ENCODE measurements at regions of chr11 and their contacts with region 1.

Region 1: GRCh38 chr11:34840736-34841386 is 75.3 kb downstream of the APIP start:
- DNase-seq: no peak
- H3K4me3 Mint-ChIP-seq: no peak overlapping the region
- H3K27ac Mint-ChIP-seq: no peak overlapping the region
- H3K4me1 Mint-ChIP-seq: no peaks in the 10 kb centered on the region
- H3K27me3 Mint-ChIP-seq: peaks cover 23% of the 10 kb centered on the region

Region 2: GRCh38 chr11:34749666-34750659 is 90.9 kb before region 1 on chr11:
- intact Hi-C with region 1: no loop called
- DNase-seq: no peak
- H3K4me3 Mint-ChIP-seq: no peak overlapping the region
- H3K27ac Mint-ChIP-seq: no peak overlapping the region
- H3K4me1 Mint-ChIP-seq: no peaks in the 10 kb centered on the region
- H3K27me3 Mint-ChIP-seq: peaks cover 12% of the 10 kb centered on the region

Region 3: GRCh38 chr11:34819740-34820482 is 20.9 kb before region 1 on chr11:
- intact Hi-C with region 1: no loop called
- DNase-seq: no peak
- H3K4me3 Mint-ChIP-seq: no peak overlapping the region
- H3K27ac Mint-ChIP-seq: no peak overlapping the region
- H3K4me1 Mint-ChIP-seq: peaks cover 9% of the 10 kb centered on the region
- H3K27me3 Mint-ChIP-seq: peaks cover 8% of the 10 kb centered on the region

Region 4: GRCh38 chr11:35412285-35412684 is 571.4 kb after region 1 on chr11:
- intact Hi-C with region 1: loop called (anchors 5 kb)
- DNase-seq: no peak
- H3K4me3 Mint-ChIP-seq: no peak overlapping the region
- H3K27ac Mint-ChIP-seq: no peak overlapping the region
- H3K4me1 Mint-ChIP-seq: no peaks in the 10 kb centered on the region
- H3K27me3 Mint-ChIP-seq: peaks cover 61% of the 10 kb centered on the region

Measured in activated T-helper 1 cell treated with anti-CD3 and anti-CD28 coated beads, Interleukin-12 subunit alpha, Interleukin-12 subunit beta, Interleukin-2, Interleukin-4 antibody, amounts not matched to agents 30 ng/mL and 10 ng/mL and 1 ng/mL, durations not matched to agents 14 hours and 24 hours and 36 hours (primary cell).